ENCODE measurements at regions of chr1 and their contacts with region 1.

Region 1: DNA sequence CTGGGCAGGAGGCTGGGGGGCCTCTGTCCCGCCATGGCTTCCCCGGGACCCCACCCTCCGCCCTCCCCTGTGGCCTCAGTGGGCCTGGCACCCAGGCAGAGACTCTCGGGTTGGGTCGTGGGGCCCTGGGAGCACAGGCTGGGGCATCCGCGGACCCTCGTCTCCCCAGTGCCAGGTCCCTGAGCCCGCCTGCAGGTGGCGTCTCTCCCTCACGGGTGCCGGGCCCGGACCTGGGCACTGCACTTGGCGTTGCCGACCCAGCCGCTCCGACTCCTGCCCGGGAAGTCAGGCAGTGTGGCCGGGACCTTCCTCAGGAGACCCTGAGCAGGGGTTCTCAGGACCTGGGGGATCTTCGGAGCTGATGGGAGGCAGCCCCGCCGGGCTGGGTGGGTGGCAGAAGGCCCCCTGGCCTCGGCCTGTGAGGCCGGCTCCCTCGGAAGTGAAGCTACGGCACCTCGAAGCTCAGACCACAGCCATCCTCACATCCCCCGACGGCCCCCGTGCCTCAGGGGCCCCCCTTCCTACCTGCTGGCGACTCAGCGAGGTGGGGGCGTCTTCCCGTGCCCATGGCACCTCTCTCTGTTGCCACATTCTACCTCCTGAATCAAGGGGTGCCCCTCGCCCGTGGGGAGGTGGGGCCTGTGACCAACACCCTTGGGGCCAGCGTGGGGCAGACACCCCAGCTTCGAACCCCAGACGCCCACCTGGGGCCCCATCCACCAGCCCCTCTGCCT is 6.4 kb upstream of the C1orf159 start:
- DNase-seq: no peak
- ATAC-seq: peak; percentile 99
- H3K4me3 ChIP-seq: no peak overlapping the region
- H3K27ac ChIP-seq: no peak overlapping the region
- H3K4me1 ChIP-seq: 0 out of 2 replicates have a peak, but pooled peaks cover 4% of the 10 kb centered on the region
- H3K27me3 ChIP-seq: peaks cover 2 to 6% of the 10 kb centered on the region in 2 experiments; a peak in 3 of 4 replicates
- CTCF ChIP-seq: peak; percentile 73 to 98 (median 93); a peak in 5 of 6 replicates
- EP300 ChIP-seq: no peak
- POLR2A ChIP-seq: no peak
- RAD21 ChIP-seq: peak; percentile 89

Region 2: DNA sequence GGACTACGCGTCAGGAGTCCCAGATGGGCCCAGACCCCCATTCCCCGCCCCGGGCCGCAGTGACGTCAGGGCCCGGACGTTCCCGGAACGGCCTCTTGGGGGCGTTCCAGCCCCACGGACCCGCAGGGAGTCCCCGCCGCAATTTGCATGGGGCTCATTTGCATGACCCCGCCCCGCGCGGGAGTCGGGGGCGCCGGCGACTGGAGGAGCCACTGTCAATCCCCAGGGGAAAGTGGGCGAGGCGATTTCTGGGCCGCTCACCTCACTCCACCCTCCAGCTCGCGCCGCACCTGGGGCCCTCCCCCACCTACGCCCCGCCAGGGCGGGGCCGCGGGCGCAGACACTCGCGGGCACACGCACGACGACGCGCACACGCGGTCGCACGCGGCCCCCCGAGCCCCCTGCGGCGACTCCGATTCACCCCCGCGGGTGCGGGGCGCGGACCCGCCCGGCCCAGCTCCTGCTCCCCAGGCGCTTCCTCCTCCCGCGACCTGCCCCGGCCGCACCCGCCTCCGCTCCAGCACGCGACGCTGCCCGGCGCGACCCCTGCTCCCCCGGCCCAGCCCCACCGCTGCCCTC is 89.1 kb before region 1 on chr1:
- CTCF ChIA-PET with region 1: interaction called, 11 read pairs
- POLR2A ChIA-PET with region 1: interaction called, 5 read pairs
- RAD21 ChIA-PET with region 1: interaction called, 5 read pairs
- SMC1A ChIA-PET with region 1: interaction called, 7 read pairs
- in situ Hi-C with region 1: no loop called
- intact Hi-C with region 1: no loop called
- DNase-seq: peak; percentile 72
- ATAC-seq: peak; percentile 92
- H3K4me3 ChIP-seq: peak overlapping the region; percentile 50; the same call in 1 of the 2 replicates
- H3K27ac ChIP-seq: no peak overlapping the region
- H3K4me1 ChIP-seq: peaks cover 27% of the 10 kb centered on the region
- H3K27me3 ChIP-seq: no peaks in the 10 kb centered on the region
- CTCF ChIP-seq: peak; percentile 80 to 97 (median 84)
- EP300 ChIP-seq: 0 out of 4 replicates have a peak, but pooled peaks of 1 of the 2 experiments have one; percentile 35
- POLR2A ChIP-seq: no peak
- RAD21 ChIP-seq: peak; percentile 74

Region 3: GRCh38 chr1:1144122-1144842 is 22.0 kb after region 1 on chr1:
- CTCF ChIA-PET with region 1: no interaction called
- POLR2A ChIA-PET with region 1: no interaction called
- RAD21 ChIA-PET with region 1: no interaction called
- SMC1A ChIA-PET with region 1: no interaction called
- in situ Hi-C with region 1: no loop called
- intact Hi-C with region 1: no loop called
- DNase-seq: no peak
- ATAC-seq: peak; percentile 86
- H3K4me3 ChIP-seq: no peak overlapping the region
- H3K27ac ChIP-seq: no peak overlapping the region
- H3K4me1 ChIP-seq: peaks cover 8% of the 10 kb centered on the region
- H3K27me3 ChIP-seq: no peaks in the 10 kb centered on the region
- CTCF ChIP-seq: no peak
- EP300 ChIP-seq: no peak
- POLR2A ChIP-seq: no peak; the same call in 1 of the 2 replicates
- RAD21 ChIP-seq: no peak

Region 4: DNA sequence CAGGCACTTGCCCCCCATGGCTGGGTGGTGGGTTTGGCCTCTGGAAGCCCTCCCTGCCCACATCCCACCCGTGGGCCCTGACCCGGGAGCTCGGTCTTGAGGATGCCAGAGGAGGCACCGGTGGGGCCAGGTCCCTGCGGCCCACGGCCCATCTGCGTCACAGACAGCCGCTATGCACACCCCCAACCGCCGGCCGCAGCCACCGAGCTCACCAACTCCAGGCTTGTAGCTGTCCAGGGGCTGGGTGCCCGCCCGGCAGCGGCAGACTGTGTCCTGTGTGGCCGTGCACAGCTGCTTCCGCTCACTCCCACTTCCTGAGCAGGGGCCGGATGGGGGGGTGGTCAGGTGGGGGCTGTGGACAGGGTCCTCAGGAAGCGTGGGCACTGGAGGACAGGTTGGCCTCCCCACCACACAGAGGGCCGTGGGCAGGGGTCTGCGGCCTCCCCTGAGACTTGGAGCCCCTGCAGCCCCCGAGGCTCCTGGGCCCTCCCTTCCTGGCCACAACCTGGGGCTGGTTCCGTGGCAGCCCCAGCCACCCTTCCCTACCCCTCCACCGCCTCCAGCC is 90.6 kb after region 1 on chr1:
- CTCF ChIA-PET with region 1: interaction called, 14 read pairs
- POLR2A ChIA-PET with region 1: interaction called, 5 read pairs
- RAD21 ChIA-PET with region 1: interaction called, 10 read pairs
- SMC1A ChIA-PET with region 1: interaction called, 8 read pairs
- in situ Hi-C with region 1: no loop called
- intact Hi-C with region 1: no loop called
- DNase-seq: no peak
- ATAC-seq: peak; percentile 70
- H3K4me3 ChIP-seq: peak overlapping the region; percentile 27; the same call in 1 of the 2 replicates
- H3K27ac ChIP-seq: peak overlapping the region; percentile 25; the same call in 1 of the 2 replicates
- H3K4me1 ChIP-seq: peaks cover 38% of the 10 kb centered on the region
- H3K27me3 ChIP-seq: no peaks in the 10 kb centered on the region
- CTCF ChIP-seq: no peak
- EP300 ChIP-seq: no peak; a peak in 1 of 4 replicates
- POLR2A ChIP-seq: no peak
- RAD21 ChIP-seq: no peak

Region 5: DNA sequence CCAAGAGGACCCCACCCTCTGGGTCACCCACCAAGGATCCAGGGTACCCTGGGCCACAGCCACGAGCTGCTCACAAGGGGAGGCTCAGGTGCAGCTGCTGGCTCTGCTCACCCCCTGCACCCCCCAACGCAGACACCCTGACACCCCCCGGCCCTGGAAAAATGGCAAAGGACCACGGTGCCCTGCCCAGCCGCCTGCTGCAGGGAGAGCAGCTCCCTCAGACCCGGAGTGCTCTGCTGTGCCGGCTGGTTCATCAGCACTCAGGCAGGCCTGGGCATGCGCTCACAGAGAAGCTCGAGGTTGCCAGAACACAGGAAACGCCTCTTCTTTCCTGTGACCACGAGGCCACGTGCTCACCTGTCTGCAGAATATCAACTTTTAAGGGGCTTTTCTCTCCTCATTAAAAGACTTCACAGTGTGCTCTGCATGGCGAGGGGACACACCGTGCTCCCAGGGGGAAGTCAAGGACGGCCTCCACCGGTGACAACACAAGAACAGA is 128.6 kb after region 1 on chr1:
- CTCF ChIA-PET with region 1: interaction called, 100 read pairs
- POLR2A ChIA-PET with region 1: interaction called, 19 read pairs
- RAD21 ChIA-PET with region 1: interaction called, 92 read pairs
- SMC1A ChIA-PET with region 1: interaction called, 36 read pairs
- in situ Hi-C with region 1: loop called (anchors 5 kb)
- intact Hi-C with region 1: loop called (anchors 1 kb)
- DNase-seq: peak; percentile 53
- ATAC-seq: peak; percentile 97
- H3K4me3 ChIP-seq: no peak overlapping the region
- H3K27ac ChIP-seq: peak overlapping the region; percentile 82
- H3K4me1 ChIP-seq: peaks cover 12% of the 10 kb centered on the region
- H3K27me3 ChIP-seq: peaks cover 1 to 5% of the 10 kb centered on the region in 2 experiments; a peak in 3 of 4 replicates
- CTCF ChIP-seq: 0 out of 6 replicates have a peak, but pooled peaks of 1 of the 3 experiments have one; percentile 5
- EP300 ChIP-seq: peak in 1 of 2 experiments; percentile 37; a peak in 1 of 4 replicates
- POLR2A ChIP-seq: peak; percentile 80
- RAD21 ChIP-seq: no peak

Region 6: DNA sequence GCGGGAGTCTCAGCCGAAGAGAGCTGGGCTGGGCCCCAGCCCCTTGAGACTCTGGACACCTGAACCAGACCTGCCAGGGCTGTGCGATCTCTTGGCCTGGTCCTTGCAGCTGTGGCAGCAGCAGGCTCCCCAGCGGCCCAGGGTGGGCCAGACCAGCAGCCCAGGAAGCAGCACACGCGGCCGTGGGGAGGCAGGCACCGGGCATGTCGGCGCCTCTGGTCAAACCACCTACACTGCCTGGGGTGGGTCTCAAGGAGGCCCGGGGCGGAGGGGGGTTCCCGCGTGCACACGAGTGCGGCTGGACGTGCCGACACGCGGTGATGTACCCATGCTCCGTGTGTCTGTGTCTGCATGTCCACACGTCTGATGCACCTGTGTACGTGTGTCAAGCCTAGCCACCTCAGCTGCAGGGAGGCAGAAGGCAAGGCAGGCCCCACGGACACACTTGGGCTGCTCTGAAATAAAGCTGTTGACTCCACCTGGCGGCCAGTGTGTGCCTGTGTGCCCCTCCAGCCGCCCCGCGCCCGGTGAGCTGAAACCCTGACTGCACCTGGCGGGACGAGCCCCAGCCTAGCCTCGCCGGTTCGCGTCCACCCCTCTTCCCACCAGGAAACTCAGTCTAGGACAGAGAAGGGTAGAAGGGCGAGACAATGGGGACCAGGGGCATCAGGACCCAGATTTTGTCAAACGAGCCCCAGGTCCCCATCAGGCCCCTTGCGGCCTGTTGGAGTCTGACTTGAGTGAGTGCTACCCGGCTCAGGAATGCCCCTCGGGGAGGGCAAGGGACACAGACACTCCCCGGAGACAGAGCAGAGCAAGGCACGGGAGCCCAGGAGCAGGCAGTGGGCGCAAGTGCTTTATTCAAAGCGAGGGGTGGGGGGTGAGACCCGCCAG is 169.6 kb after region 1 on chr1:
- CTCF ChIA-PET with region 1: interaction called, 57 read pairs
- POLR2A ChIA-PET with region 1: interaction called, 4 read pairs
- RAD21 ChIA-PET with region 1: interaction called, 63 read pairs
- SMC1A ChIA-PET with region 1: interaction called, 23 read pairs
- in situ Hi-C with region 1: no loop called
- intact Hi-C with region 1: loop called (anchors 2 kb)
- DNase-seq: no peak
- ATAC-seq: peak; percentile 96
- H3K4me3 ChIP-seq: no peak overlapping the region
- H3K27ac ChIP-seq: no peak overlapping the region
- H3K4me1 ChIP-seq: no peaks in the 10 kb centered on the region
- H3K27me3 ChIP-seq: no peaks in the 10 kb centered on the region
- CTCF ChIP-seq: peak; percentile 78 to 85 (median 79)
- EP300 ChIP-seq: no peak
- POLR2A ChIP-seq: peak; percentile 60
- RAD21 ChIP-seq: peak; percentile 62